ENCODE measurements at regions of chr11 and their contacts with region 1.

Region 1: GRCh38 chr11:9757809-9758636 is 94.1 kb downstream of the SWAP70 start:
- DNase-seq: peak; percentile 64
- H3K4me3 Mint-ChIP-seq: peak overlapping the region; percentile 70
- H3K27ac Mint-ChIP-seq: peak overlapping the region; percentile 68
- H3K4me1 Mint-ChIP-seq: peaks cover 69% of the 10 kb centered on the region
- H3K27me3 Mint-ChIP-seq: no peaks in the 10 kb centered on the region
- CTCF ChIP-seq: peak; percentile 87

Region 2: GRCh38 chr11:9573052-9573774 is 184.8 kb before region 1 on chr11 and contains the start of gene WEE1:
- CTCF ChIA-PET with region 1: interaction called, 6 read pairs
- POLR2A ChIA-PET with region 1: interaction called, 27 read pairs
- intact Hi-C with region 1: no loop called
- DNase-seq: peak; percentile 98
- H3K4me3 Mint-ChIP-seq: peak within 1 kb of the TSS; percentile 79
- H3K27ac Mint-ChIP-seq: peak within 1 kb of the TSS; percentile 99
- H3K4me1 Mint-ChIP-seq: peaks cover 20% of the 10 kb centered on the region
- H3K27me3 Mint-ChIP-seq: no peaks in the 10 kb centered on the region
- CTCF ChIP-seq: no peak
- total RNA-seq, gene WEE1: 28.7 and 34.5 TPM in 2 replicates

Region 3: GRCh38 chr11:9796854-9797253 is 38.8 kb after region 1 on chr11:
- CTCF ChIA-PET with region 1: interaction called, 6 read pairs
- POLR2A ChIA-PET with region 1: interaction called, 64 read pairs
- intact Hi-C with region 1: no loop called
- DNase-seq: no peak
- H3K4me3 Mint-ChIP-seq: no peak overlapping the region
- H3K27ac Mint-ChIP-seq: no peak overlapping the region
- H3K4me1 Mint-ChIP-seq: peaks cover 6% of the 10 kb centered on the region
- H3K27me3 Mint-ChIP-seq: no peaks in the 10 kb centered on the region
- CTCF ChIP-seq: no peak

Region 4: DNA sequence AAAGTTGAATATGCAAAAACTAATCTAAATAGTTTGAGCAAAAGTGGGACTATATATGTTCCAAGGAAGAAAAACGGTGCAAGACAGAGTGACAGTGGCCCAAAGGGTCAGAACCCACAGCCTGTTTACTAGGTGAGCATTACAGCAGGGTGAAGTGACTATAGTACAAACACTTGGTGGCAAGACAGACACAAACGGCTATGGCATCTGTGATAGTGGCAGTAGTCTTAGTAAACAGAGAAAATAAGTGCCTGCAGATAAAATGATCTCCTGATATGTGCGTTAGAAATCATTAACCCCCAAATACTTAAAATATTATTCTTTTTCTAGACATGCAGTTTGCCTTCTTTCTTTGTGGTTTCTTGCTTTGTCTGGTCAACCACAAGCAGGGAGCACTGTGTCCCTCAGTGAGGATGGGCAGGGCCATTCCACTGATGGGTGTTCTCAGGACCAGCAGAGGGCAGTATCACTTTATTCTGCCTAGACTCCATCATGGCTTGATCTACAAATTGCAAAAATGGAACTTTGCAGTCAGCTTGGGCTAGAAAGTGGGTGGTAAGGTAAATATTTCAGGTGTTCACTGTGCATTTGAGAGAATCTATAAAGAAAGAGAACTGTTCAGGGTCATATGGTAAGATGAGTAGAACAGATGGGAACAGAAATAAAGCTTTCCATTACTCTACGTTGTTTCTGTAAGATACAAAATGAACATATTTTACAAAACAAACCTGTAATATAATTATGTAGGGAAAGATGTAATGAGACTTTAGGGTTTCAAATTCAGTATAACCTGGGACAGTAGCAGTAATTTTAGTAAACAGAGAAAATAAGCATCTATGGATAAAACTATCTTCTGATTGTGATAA is 104.1 kb after region 1 on chr11:
- CTCF ChIA-PET with region 1: interaction called, 5 read pairs
- POLR2A ChIA-PET with region 1: interaction called, 3 read pairs
- intact Hi-C with region 1: loop called (anchors 1 kb)
- DNase-seq: peak; percentile 80
- H3K4me3 Mint-ChIP-seq: no peak overlapping the region
- H3K27ac Mint-ChIP-seq: no peak overlapping the region
- H3K4me1 Mint-ChIP-seq: peaks cover 8% of the 10 kb centered on the region
- H3K27me3 Mint-ChIP-seq: no peaks in the 10 kb centered on the region
- CTCF ChIP-seq: peak; percentile 80

Region 5: DNA sequence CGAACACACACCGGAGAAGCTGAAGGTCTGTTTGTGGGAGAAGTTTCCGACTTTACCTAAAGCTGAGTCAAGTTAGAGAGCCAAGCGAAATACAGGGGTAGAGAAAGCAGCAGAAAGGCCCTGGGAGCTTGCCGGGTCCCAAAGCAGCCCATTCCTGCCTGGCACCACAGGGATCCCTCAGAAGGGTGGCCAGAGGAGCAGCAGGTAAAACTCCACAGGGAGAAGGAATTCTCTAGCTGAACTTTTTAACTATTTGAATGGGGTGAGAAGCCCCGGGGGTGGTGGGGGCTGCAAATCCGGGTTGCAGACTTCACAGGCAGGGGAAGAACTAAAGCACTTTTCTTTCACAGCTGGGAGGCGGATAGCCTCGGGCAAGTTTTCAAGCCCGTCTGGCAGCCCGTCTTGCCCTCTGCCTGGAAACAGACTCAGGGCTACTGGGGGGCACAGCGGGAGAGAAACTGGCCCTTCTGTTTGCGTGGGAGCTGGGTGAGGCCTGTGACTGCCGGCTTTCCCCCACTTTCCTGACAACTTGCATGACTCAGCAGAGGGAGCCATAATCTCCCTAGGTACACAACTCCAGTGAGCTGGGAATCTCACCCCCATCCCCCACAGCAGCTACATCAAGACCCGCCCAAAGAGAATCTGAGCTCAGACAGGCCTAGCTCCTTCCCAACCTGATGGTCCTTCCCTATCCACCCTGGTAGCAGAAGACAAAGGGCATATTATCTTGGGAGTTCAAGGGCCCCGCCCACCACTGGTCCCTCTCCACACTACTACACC is 225.0 kb after region 1 on chr11:
- CTCF ChIA-PET with region 1: interaction called, 5 read pairs
- POLR2A ChIA-PET with region 1: interaction called, 17 read pairs
- intact Hi-C with region 1: no loop called
- DNase-seq: peak; percentile 80
- H3K4me3 Mint-ChIP-seq: peak overlapping the region; percentile 55
- H3K27ac Mint-ChIP-seq: peak overlapping the region; percentile 91
- H3K4me1 Mint-ChIP-seq: peaks cover 25% of the 10 kb centered on the region
- H3K27me3 Mint-ChIP-seq: no peaks in the 10 kb centered on the region
- CTCF ChIP-seq: no peak

Region 6: DNA sequence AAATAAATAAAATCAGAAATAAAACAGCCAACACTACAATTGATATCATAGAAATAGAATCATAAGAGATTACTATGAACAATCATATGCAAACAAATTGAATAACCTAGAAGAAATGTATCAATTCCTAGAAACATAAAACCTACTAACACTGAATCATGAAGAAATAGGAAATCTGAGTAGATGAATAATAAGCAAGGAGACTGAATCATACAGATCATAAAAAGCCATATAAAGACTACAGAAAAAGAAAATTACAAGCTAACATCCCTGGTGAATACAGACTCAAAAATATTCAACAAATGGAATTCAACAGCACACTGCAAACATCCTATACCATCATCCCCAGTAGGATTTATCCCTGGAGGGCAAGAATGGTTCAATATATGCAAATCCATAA is 400.4 kb after region 1 on chr11:
- CTCF ChIA-PET with region 1: no interaction called
- POLR2A ChIA-PET with region 1: no interaction called
- intact Hi-C with region 1: no loop called
- DNase-seq: no peak
- H3K4me3 Mint-ChIP-seq: no peak overlapping the region
- H3K27ac Mint-ChIP-seq: no peak overlapping the region
- H3K4me1 Mint-ChIP-seq: peaks cover 19% of the 10 kb centered on the region
- H3K27me3 Mint-ChIP-seq: no peaks in the 10 kb centered on the region
- CTCF ChIP-seq: no peak

Region 7: GRCh38 chr11:10322830-10323792 is 565.1 kb after region 1 on chr11:
- CTCF ChIA-PET with region 1: interaction called, 7 read pairs
- POLR2A ChIA-PET with region 1: interaction called, 5 read pairs
- intact Hi-C with region 1: loop called (anchors 1 kb)
- DNase-seq: peak; percentile 87
- H3K4me3 Mint-ChIP-seq: no peak overlapping the region
- H3K27ac Mint-ChIP-seq: peak overlapping the region; percentile 54
- H3K4me1 Mint-ChIP-seq: peaks cover 20% of the 10 kb centered on the region
- H3K27me3 Mint-ChIP-seq: no peaks in the 10 kb centered on the region
- CTCF ChIP-seq: peak; percentile 43

Region 8: GRCh38 chr11:10735481-10736475 is 977.8 kb after region 1 on chr11:
- CTCF ChIA-PET with region 1: no interaction called
- POLR2A ChIA-PET with region 1: no interaction called
- intact Hi-C with region 1: loop called (anchors 2 kb)
- DNase-seq: peak; percentile 93
- H3K4me3 Mint-ChIP-seq: peak overlapping the region; percentile 66
- H3K27ac Mint-ChIP-seq: peak overlapping the region; percentile 82
- H3K4me1 Mint-ChIP-seq: peaks cover 14% of the 10 kb centered on the region
- H3K27me3 Mint-ChIP-seq: no peaks in the 10 kb centered on the region
- CTCF ChIP-seq: peak; percentile 98

Measured in MCF 10A (cell line).